Activated CD4-positive, alpha-beta memory T cell treated with anti-CD3 and anti-CD28 coated beads, Interleukin-2, amount 10 ng/mL, durations not matched to agents 7 days and 5 days (primary cell): ENCODE measurements at regions of chr1 and their contacts with region 1.

Region 1: GRCh38 chr1:183635606-183636333 is at the start of gene ARPC5:
- DNase-seq: peak; percentile 97
- H3K4me3 Mint-ChIP-seq: peak within 1 kb of the TSS; percentile 100
- H3K27ac Mint-ChIP-seq: peak within 1 kb of the TSS; percentile 100
- H3K4me1 Mint-ChIP-seq: peaks cover 34% of the 10 kb centered on the region
- H3K27me3 Mint-ChIP-seq: peaks cover 20% of the 10 kb centered on the region
- total RNA-seq, gene ARPC5: 233 to 235 TPM

Region 2: GRCh38 chr1:183471743-183472487 is 163.9 kb before region 1 on chr1:
- CTCF ChIA-PET with region 1: interaction called, 7 read pairs
- POLR2A ChIA-PET with region 1: interaction called, 39 read pairs
- DNase-seq: peak; percentile 96
- H3K4me3 Mint-ChIP-seq: peak overlapping the region; percentile 95
- H3K27ac Mint-ChIP-seq: peak overlapping the region; percentile 96
- H3K4me1 Mint-ChIP-seq: peaks cover 22% of the 10 kb centered on the region
- H3K27me3 Mint-ChIP-seq: no peaks in the 10 kb centered on the region

Region 3: DNA sequence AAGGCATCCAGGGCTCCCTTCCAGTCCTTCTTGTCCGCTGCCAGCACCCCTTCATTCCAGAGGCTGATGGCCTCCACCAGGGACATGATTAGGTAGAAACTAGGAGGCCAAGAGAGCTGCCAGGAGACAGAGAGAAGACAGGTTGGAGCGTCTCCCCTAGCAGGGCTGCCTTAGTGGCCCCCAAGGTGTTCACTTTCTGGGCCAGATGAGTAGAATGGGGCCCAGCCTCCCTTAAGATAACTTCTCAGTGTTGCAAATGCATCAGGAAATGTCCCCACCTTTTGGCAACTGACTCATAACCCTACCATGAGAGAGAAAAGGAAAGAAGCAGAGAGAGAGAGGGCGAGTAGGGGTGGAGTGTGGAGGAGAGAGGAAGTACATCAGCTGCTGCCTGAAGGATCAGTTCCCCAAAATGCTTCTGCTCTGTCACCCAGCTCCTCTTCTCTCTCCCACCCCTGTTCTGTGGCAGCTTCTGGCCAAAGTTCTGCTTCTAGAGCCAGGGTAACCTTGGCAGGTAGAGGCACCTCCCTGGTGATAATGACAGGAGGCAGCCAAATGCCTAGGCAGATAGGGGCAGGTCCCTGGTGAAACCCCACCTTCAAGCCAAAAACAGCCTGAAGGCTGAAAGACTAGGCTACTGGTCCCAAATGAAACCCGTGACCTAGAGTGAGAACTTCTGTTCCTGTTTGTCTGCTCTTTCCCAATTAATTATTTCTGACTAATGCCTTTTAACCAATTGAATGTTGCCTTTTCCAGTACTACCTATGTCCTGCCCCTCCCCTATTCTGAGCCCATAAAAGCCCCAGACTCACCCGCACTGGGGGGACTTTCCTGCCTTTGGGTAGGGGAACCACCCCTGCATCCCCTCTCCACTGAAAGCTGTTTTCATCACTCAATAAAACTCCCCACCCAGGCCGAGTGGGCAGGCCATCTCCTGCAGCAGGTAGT is 45.3 kb before region 1 on chr1 and contains the start of gene NCF2:
- CTCF ChIA-PET with region 1: interaction called, 4 read pairs
- POLR2A ChIA-PET with region 1: interaction called, 25 read pairs
- DNase-seq: peak; percentile 67
- H3K4me3 Mint-ChIP-seq: peak within 1 kb of the TSS; percentile 73
- H3K27ac Mint-ChIP-seq: peak within 1 kb of the TSS; percentile 93
- H3K4me1 Mint-ChIP-seq: peaks cover 46% of the 10 kb centered on the region
- H3K27me3 Mint-ChIP-seq: no peaks in the 10 kb centered on the region
- total RNA-seq, gene NCF2: 21.5 to 23.0 TPM

Region 4: DNA sequence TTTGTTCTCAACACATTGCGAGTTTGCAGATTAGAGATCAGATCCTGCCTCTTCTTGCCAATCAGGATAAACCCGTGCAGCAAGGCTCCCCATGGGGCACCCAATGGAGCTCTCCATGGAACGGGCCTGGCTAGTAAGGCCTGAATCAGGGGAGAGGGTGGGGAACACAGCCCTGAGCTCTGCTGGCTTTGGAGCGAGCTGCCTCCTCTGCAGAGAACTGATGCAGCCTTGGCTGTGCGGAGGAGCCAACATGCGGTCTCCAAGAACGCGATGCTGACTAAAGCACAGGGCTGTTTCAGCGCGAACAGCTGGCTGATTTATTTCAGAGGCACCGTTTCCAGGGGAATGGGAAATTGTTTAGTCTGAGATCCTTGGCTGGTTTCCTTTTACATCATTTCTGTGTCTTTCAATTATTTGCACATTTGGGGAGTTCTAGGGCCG is 555.4 kb after region 1 on chr1:
- CTCF ChIA-PET with region 1: no interaction called
- POLR2A ChIA-PET with region 1: no interaction called
- DNase-seq: no peak
- H3K4me3 Mint-ChIP-seq: no peak overlapping the region
- H3K27ac Mint-ChIP-seq: no peak overlapping the region
- H3K4me1 Mint-ChIP-seq: no peaks in the 10 kb centered on the region
- H3K27me3 Mint-ChIP-seq: peaks cover 20% of the 10 kb centered on the region